ENCODE measurements at regions of chr4 and their contacts with region 1.

Region 1: DNA sequence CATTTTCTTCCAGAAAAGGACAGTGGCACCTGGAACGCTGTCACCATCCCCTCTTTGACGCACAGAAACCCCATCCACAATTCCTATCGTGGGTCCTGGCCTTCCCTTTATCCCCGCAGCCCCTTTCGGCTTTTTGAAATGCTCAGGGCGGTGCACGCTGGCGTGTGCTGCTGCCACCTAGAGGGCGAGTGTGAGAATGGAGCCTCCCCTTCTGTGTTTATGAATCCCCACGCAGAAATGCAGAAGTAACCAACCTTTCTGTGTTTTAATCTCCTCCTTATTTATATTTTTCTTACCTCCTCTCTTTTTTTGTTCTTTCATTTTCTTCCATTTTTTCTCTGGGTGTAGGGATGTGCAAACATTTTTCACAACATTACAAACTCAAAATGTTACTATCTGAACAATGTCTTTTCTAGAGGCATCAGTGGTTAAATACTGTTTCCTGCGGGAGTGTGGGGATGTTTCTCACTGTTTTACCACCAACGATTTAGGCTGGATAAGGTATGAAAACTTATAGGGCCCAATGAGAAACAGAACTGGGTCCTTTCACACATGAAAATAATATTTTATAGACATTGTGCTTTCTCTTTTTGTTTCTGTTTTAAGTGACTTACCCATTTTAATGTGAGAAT is 50.0 kb downstream of the TMA16 start:
- DNase-seq: peak in 7 of 9 donors; percentile 21 to 58 (median 43)
- ATAC-seq: peak; percentile 95
- H3K4me3 ChIP-seq: peak overlapping the region; percentile 46
- H3K4me3 Mint-ChIP-seq: no peak overlapping the region
- H3K27ac ChIP-seq: no peak overlapping the region
- H3K27ac Mint-ChIP-seq: no peak overlapping the region
- H3K4me1 ChIP-seq: peaks cover 0 to 2% of the 10 kb centered on the region in 2 donors
- H3K4me1 Mint-ChIP-seq: peaks cover 0 to 11% (median 9%) of the 10 kb centered on the region in 7 donors
- H3K27me3 ChIP-seq: no peaks in the 10 kb centered on the region
- H3K27me3 Mint-ChIP-seq: no peaks in the 10 kb centered on the region

Region 2: DNA sequence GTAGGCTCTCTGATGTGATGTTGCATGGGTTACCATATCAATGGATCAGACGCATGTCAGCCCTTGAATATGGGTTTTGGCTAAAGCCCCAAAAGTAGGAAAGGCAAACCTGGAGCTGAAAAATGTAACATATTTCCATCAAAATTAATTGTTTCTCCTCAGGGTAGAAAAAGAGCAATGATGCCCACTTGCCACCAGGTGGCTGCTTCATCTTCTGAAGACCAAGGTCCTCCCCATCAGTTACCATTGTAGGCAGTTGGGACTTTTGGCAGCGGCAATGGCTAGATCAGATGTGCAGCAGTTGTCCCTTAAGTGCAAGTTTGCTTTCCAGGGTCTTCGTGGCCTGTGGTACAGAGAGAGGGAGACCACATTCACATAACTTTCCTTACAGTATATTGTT is 496.1 kb before region 1 on chr4:
- CTCF ChIA-PET with region 1: no interaction called
- POLR2A ChIA-PET with region 1: interaction called, 3 read pairs
- intact Hi-C with region 1: loop called in 1 of 2 experiments (anchors 1 kb)
- DNase-seq: peak in 4 of 9 donors; percentile 3 to 8 (median 5)
- ATAC-seq: no peak
- H3K4me3 ChIP-seq: no peak overlapping the region
- H3K4me3 Mint-ChIP-seq: no peak overlapping the region
- H3K27ac ChIP-seq: no peak overlapping the region
- H3K27ac Mint-ChIP-seq: no peak overlapping the region
- H3K4me1 ChIP-seq: no peaks in the 10 kb centered on the region
- H3K4me1 Mint-ChIP-seq: no peaks in the 10 kb centered on the region
- H3K27me3 ChIP-seq: no peaks in the 10 kb centered on the region
- H3K27me3 Mint-ChIP-seq: peaks cover 0 to 16% (median 11%) of the 10 kb centered on the region in 5 donors

Region 3: GRCh38 chr4:163166041-163166579 is 378.4 kb before region 1 on chr4:
- CTCF ChIA-PET with region 1: no interaction called
- POLR2A ChIA-PET with region 1: no interaction called
- intact Hi-C with region 1: loop called in 1 of 2 experiments (anchors 1 kb)
- DNase-seq: peak; percentile 42 to 70 (median 63)
- ATAC-seq: peak; percentile 60
- H3K4me3 ChIP-seq: peak overlapping the region; percentile 69
- H3K4me3 Mint-ChIP-seq: peak overlapping the region; percentile 88 to 98 (median 92)
- H3K27ac ChIP-seq: peak overlapping the region; percentile 98
- H3K27ac Mint-ChIP-seq: peak overlapping the region; percentile 97 to 100 (median 99)
- H3K4me1 ChIP-seq: peaks cover 5 to 19% of the 10 kb centered on the region in 2 donors
- H3K4me1 Mint-ChIP-seq: peaks cover 28 to 67% (median 54%) of the 10 kb centered on the region in 7 donors
- H3K27me3 ChIP-seq: no peaks in the 10 kb centered on the region
- H3K27me3 Mint-ChIP-seq: no peaks in the 10 kb centered on the region

Region 4: GRCh38 chr4:163263606-163264005 is 280.9 kb before region 1 on chr4:
- CTCF ChIA-PET with region 1: no interaction called
- POLR2A ChIA-PET with region 1: no interaction called
- intact Hi-C with region 1: no loop called
- DNase-seq: no peak
- ATAC-seq: no peak
- H3K4me3 ChIP-seq: no peak overlapping the region
- H3K4me3 Mint-ChIP-seq: no peak overlapping the region
- H3K27ac ChIP-seq: no peak overlapping the region
- H3K27ac Mint-ChIP-seq: no peak overlapping the region
- H3K4me1 ChIP-seq: no peaks in the 10 kb centered on the region
- H3K4me1 Mint-ChIP-seq: no peaks in the 10 kb centered on the region
- H3K27me3 ChIP-seq: no peaks in the 10 kb centered on the region
- H3K27me3 Mint-ChIP-seq: peaks cover 0 to 22% (median 5%) of the 10 kb centered on the region in 5 donors

Region 5: DNA sequence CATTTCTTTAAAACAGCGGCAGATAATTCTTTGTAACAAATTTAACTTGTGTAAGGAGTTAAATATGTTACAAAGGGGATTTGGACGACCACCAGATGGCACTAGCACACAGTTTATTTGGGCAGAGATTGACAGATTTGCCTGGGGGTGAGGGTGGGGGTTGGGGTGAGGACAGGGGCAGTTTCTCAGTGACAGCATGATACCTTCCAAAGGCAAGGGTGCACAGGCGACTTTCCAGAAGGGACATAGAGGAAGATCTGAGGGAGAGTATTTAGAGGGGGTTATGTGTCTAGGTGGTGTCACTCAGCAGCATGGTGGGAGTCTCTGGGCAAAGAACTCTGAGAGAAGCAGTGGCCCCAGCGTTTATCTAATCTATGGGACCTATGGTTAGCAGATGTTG is 59.6 kb before region 1 on chr4:
- CTCF ChIA-PET with region 1: interaction called, 18 read pairs
- POLR2A ChIA-PET with region 1: interaction called, 3 read pairs
- intact Hi-C with region 1: loop called (anchors 1 kb)
- DNase-seq: peak in 8 of 9 donors; percentile 14 to 50 (median 36)
- ATAC-seq: peak; percentile 74
- H3K4me3 ChIP-seq: no peak overlapping the region
- H3K4me3 Mint-ChIP-seq: no peak overlapping the region
- H3K27ac ChIP-seq: no peak overlapping the region
- H3K27ac Mint-ChIP-seq: no peak overlapping the region
- H3K4me1 ChIP-seq: no peaks in the 10 kb centered on the region
- H3K4me1 Mint-ChIP-seq: peaks cover 0 to 6% (median 0%) of the 10 kb centered on the region in 7 donors
- H3K27me3 ChIP-seq: no peaks in the 10 kb centered on the region
- H3K27me3 Mint-ChIP-seq: peaks cover 4 to 21% (median 10%) of the 10 kb centered on the region in 5 donors

Region 6: DNA sequence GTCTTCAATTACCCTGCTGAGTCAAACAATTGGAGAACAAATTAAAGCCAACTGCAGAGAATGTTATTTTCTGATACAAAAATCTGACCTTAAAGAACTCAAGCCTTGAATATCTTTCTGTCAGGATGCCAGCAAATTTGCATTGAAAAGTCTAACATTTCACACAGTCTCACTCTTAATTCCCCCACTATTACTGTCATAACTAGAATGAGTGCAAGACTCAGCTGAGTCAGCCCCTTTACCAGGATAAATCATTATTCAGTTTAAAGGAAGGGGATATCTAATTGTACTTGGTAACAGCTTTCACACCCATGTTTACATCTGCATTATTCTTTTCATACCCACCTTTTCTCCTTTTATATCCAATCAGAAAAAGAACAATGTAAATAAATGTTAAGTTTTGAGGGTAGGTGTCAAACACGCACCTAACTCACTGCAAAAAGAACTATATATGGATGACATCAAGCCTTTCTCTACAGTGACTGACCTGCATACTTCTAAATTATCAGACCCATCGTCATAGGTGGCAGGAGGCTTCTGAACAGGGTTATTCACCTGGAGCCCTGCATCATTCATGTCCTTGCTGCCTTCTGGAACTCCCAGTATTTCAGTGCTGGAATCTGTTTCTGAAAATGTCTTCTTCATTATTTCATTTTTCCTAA is 67.4 kb after region 1 on chr4:
- CTCF ChIA-PET with region 1: no interaction called
- POLR2A ChIA-PET with region 1: no interaction called
- intact Hi-C with region 1: no loop called
- DNase-seq: no peak
- ATAC-seq: no peak
- H3K4me3 ChIP-seq: no peak overlapping the region
- H3K4me3 Mint-ChIP-seq: no peak overlapping the region
- H3K27ac ChIP-seq: no peak overlapping the region
- H3K27ac Mint-ChIP-seq: no peak overlapping the region
- H3K4me1 ChIP-seq: no peaks in the 10 kb centered on the region
- H3K4me1 Mint-ChIP-seq: peaks cover 0 to 30% (median 22%) of the 10 kb centered on the region in 7 donors
- H3K27me3 ChIP-seq: no peaks in the 10 kb centered on the region
- H3K27me3 Mint-ChIP-seq: peaks cover 0 to 27% (median 3%) of the 10 kb centered on the region in 5 donors

Region 7: GRCh38 chr4:163681208-163681821 is 136.8 kb after region 1 on chr4:
- CTCF ChIA-PET with region 1: interaction called, 181 read pairs
- POLR2A ChIA-PET with region 1: no interaction called
- intact Hi-C with region 1: no loop called
- DNase-seq: peak in 7 of 9 donors; percentile 53 to 72 (median 69)
- ATAC-seq: peak; percentile 92
- H3K4me3 ChIP-seq: no peak overlapping the region
- H3K4me3 Mint-ChIP-seq: no peak overlapping the region
- H3K27ac ChIP-seq: no peak overlapping the region
- H3K27ac Mint-ChIP-seq: no peak overlapping the region
- H3K4me1 ChIP-seq: peaks cover 0 to 4% of the 10 kb centered on the region in 2 donors
- H3K4me1 Mint-ChIP-seq: peaks cover 0 to 31% (median 10%) of the 10 kb centered on the region in 7 donors
- H3K27me3 ChIP-seq: no peaks in the 10 kb centered on the region
- H3K27me3 Mint-ChIP-seq: peaks cover 0 to 4% (median 0%) of the 10 kb centered on the region in 5 donors

Region 8: GRCh38 chr4:163959932-163960331 is 415.4 kb after region 1 on chr4:
- CTCF ChIA-PET with region 1: no interaction called
- POLR2A ChIA-PET with region 1: no interaction called
- intact Hi-C with region 1: no loop called
- DNase-seq: no peak
- ATAC-seq: no peak
- H3K4me3 ChIP-seq: no peak overlapping the region
- H3K4me3 Mint-ChIP-seq: no peak overlapping the region
- H3K27ac ChIP-seq: no peak overlapping the region
- H3K27ac Mint-ChIP-seq: no peak overlapping the region
- H3K4me1 ChIP-seq: no peaks in the 10 kb centered on the region
- H3K4me1 Mint-ChIP-seq: no peaks in the 10 kb centered on the region
- H3K27me3 ChIP-seq: no peaks in the 10 kb centered on the region
- H3K27me3 Mint-ChIP-seq: no peaks in the 10 kb centered on the region

Region 9: DNA sequence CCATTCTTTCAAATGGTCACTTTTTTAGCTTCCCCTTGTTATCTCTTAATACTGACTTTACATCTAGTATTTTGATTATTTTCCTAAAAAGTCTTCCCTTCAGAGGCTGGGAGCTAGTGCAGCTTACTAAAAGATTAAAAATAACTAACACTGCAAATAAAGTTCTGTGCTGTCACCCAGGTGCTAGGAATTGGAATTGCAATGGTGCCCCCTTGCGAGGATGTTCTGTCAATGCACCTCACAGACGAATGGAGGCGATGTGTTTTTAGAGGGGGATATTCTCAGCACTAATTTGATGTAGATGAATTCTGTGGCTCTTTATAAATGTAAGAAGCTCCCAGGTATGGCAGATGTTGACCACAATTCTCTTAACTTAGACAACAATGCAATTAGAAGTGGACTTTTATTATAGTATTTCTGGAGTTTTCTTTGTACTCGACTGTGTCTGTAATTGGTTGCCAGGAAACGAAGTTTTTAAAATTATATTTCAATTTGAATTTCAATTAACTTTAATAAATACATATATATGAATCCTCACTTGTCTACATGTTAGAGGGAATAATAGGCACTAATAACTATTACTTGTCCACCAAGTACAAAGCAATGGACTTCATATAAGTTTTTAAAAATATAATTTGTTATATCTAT is 1187.4 kb after region 1 on chr4:
- CTCF ChIA-PET with region 1: interaction called, 66 read pairs
- POLR2A ChIA-PET with region 1: no interaction called
- intact Hi-C with region 1: no loop called
- DNase-seq: peak; percentile 10 to 46 (median 39)
- ATAC-seq: peak; percentile 58
- H3K4me3 ChIP-seq: no peak overlapping the region
- H3K4me3 Mint-ChIP-seq: no peak overlapping the region
- H3K27ac ChIP-seq: no peak overlapping the region
- H3K27ac Mint-ChIP-seq: no peak overlapping the region
- H3K4me1 ChIP-seq: no peaks in the 10 kb centered on the region
- H3K4me1 Mint-ChIP-seq: peaks cover 0 to 4% (median 0%) of the 10 kb centered on the region in 7 donors
- H3K27me3 ChIP-seq: no peaks in the 10 kb centered on the region
- H3K27me3 Mint-ChIP-seq: peaks cover 10 to 16% (median 15%) of the 10 kb centered on the region in 5 donors

Measured in naive thymus-derived CD4-positive, alpha-beta T cell (primary cell).